ENCODE measurements at regions of chr3 and their contacts with region 1.

Region 1: GRCh38 chr3:185779461-185779860 is 45.4 kb downstream of the IGF2BP2 start:
- DNase-seq: no peak
- ATAC-seq: no peak
- H3K4me3 ChIP-seq: no peak overlapping the region
- H3K27ac ChIP-seq: no peak overlapping the region
- H3K4me1 ChIP-seq: peaks cover 26% of the 10 kb centered on the region
- H3K27me3 ChIP-seq: no peaks in the 10 kb centered on the region
- CTCF ChIP-seq: no peak
- POLR2A ChIP-seq: no peak
- RAD21 ChIP-seq: no peak

Region 2: GRCh38 chr3:184345317-184346144 is 1433.9 kb before region 1 on chr3:
- CTCF ChIA-PET with region 1: no interaction called
- POLR2A ChIA-PET with region 1: no interaction called
- dilution Hi-C with region 1: no loop called
- in situ Hi-C with region 1: no loop called
- intact Hi-C with region 1: loop called (anchors 10 kb)
- DNase-seq: peak; percentile 50
- ATAC-seq: peak; percentile 64
- H3K4me3 ChIP-seq: no peak overlapping the region
- H3K27ac ChIP-seq: no peak overlapping the region
- H3K4me1 ChIP-seq: peaks cover 18% of the 10 kb centered on the region
- H3K27me3 ChIP-seq: no peaks in the 10 kb centered on the region
- CTCF ChIP-seq: peak; percentile 41
- POLR2A ChIP-seq: no peak
- RAD21 ChIP-seq: peak; percentile 37

Region 3: DNA sequence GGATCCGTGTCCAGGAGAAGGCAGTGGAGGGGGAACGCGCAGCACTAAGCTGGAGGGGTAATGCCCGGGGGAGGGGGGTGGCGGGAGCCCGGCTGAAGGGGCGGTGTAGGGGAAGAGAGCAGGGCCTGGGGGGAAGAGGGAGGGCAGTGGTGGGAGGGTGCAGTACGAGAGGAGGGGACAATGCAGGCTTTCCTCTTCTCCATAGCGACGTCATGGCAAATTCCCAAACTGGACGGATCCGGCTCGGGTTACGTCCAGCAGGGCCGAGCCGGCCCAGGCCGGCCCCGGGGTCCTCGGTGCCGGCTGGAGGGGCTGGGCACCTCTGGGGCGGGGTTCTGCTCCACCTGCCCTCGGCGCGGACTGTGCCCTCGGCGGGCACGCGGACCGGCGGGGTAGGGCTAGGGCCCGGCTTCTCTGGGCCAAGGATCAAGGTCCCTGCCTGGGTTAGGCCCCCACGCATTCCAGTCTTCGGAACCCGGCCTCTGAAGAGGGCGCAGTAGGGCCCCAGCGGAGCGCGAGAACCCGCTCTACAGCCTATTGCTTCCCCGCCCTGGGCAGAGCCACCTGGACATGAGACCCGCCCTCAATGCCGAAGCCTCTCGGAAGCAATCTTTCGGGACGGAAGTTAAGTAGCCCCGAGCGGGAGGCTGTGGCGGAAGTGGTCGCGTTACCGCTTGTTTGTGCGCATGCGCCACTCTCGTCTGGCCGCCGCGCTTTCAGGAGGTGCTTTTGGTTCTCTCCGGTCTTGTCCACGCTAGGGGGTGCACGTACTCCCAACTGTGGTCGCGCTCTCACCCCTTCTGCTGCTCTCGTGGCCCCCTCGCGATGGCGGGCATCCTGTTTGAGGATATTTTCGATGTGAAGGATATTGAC is 1416.6 kb before region 1 on chr3:
- CTCF ChIA-PET with region 1: no interaction called
- POLR2A ChIA-PET with region 1: no interaction called
- dilution Hi-C with region 1: no loop called
- in situ Hi-C with region 1: no loop called
- intact Hi-C with region 1: no loop called
- DNase-seq: peak; percentile 97
- ATAC-seq: peak; percentile 64
- H3K4me3 ChIP-seq: peak overlapping the region; percentile 56
- H3K27ac ChIP-seq: peak overlapping the region; percentile 95
- H3K4me1 ChIP-seq: peaks cover 7% of the 10 kb centered on the region
- H3K27me3 ChIP-seq: no peaks in the 10 kb centered on the region
- CTCF ChIP-seq: peak; percentile 68
- POLR2A ChIP-seq: peak; percentile 74
- RAD21 ChIP-seq: peak; percentile 28; the same call in 1 of the 2 replicates

Region 4: DNA sequence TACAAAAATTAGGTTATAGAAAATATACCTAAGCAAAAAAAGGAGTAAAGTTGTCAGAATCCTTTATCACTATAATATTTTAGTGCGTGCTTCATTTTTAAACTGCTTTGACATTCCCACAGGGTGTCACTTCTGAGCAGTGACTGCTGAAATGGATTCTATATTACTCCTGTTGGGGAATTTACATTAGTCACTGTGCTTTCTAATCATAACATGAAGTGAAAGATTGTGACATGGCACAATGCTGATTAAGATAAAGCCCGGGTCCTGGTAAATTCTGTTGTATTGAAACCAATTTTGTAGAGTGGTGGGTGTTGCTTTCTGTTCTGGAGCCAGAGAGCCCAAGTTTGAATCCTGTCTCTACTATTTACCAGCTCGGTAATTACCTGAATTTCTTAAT is 489.2 kb before region 1 on chr3:
- CTCF ChIA-PET with region 1: no interaction called
- POLR2A ChIA-PET with region 1: no interaction called
- dilution Hi-C with region 1: no loop called
- in situ Hi-C with region 1: no loop called
- intact Hi-C with region 1: no loop called
- DNase-seq: no peak
- ATAC-seq: no peak
- H3K4me3 ChIP-seq: no peak overlapping the region
- H3K27ac ChIP-seq: no peak overlapping the region
- H3K4me1 ChIP-seq: no peaks in the 10 kb centered on the region
- H3K27me3 ChIP-seq: no peaks in the 10 kb centered on the region
- CTCF ChIP-seq: no peak
- POLR2A ChIP-seq: no peak
- RAD21 ChIP-seq: no peak

Region 5: GRCh38 chr3:185737740-185738680 is 41.5 kb before region 1 on chr3:
- CTCF ChIA-PET with region 1: no interaction called
- POLR2A ChIA-PET with region 1: no interaction called
- dilution Hi-C with region 1: no loop called
- in situ Hi-C with region 1: no loop called
- intact Hi-C with region 1: no loop called
- DNase-seq: no peak
- ATAC-seq: no peak
- H3K4me3 ChIP-seq: no peak overlapping the region
- H3K27ac ChIP-seq: peak overlapping the region; percentile 66
- H3K4me1 ChIP-seq: peaks cover 30% of the 10 kb centered on the region
- H3K27me3 ChIP-seq: no peaks in the 10 kb centered on the region
- CTCF ChIP-seq: no peak
- POLR2A ChIP-seq: no peak
- RAD21 ChIP-seq: no peak